CD8-positive, alpha-beta memory T cell (primary cell): ENCODE measurements at regions of chr20 and their contacts with region 1.

Region 1: DNA sequence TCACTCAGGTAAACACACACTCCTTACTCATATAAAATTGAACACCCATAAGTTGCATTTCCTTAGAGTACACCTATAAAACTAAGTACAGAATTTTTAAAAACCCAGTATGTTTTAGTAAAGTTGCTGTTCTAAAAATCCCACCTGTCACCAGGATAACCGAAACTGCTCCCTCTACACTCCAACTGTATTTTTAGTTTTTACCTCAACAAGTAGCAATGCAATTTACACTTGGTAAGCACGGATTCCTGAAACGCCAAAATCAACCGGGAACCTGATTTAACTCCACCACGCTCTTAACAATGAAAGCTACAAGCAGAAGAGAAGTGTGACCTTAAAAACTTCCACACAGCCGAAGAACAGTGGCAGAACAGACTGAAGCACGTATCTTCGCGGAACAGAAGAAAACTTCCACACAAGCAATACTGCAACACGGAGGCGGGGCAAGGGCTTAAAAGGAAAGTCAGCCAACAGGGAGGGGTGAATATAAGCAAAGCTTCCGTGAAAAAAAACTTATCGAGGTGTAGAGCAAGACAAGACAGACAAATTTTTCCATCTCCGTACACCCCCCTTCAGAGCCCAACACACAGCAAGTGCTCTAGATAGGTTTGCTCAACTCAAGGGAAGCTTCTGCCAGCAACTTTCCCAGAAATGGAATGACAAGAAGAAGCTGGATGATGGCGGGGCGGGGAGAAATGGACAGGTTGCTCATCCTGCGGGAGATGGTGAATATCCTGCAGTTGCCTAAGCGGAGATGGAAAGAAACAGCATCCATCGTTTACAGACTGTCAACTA is 1.4 kb downstream of the STAU1 start:
- DNase-seq: peak; percentile 40 to 71 (median 55)
- H3K4me3 ChIP-seq: peak overlapping the region; percentile 87
- H3K4me3 Mint-ChIP-seq: peak overlapping the region; percentile 87 to 98 (median 97)
- H3K27ac ChIP-seq: peak overlapping the region; percentile 69
- H3K27ac Mint-ChIP-seq: peak overlapping the region; percentile 47 to 97 (median 92)
- H3K4me1 ChIP-seq: peaks cover 38% of the 10 kb centered on the region
- H3K4me1 Mint-ChIP-seq: peaks cover 50 to 57% (median 54%) of the 10 kb centered on the region in 3 donors
- H3K27me3 ChIP-seq: no peaks in the 10 kb centered on the region
- H3K27me3 Mint-ChIP-seq: peaks cover 1 to 3% of the 10 kb centered on the region in 2 donors

Region 2: DNA sequence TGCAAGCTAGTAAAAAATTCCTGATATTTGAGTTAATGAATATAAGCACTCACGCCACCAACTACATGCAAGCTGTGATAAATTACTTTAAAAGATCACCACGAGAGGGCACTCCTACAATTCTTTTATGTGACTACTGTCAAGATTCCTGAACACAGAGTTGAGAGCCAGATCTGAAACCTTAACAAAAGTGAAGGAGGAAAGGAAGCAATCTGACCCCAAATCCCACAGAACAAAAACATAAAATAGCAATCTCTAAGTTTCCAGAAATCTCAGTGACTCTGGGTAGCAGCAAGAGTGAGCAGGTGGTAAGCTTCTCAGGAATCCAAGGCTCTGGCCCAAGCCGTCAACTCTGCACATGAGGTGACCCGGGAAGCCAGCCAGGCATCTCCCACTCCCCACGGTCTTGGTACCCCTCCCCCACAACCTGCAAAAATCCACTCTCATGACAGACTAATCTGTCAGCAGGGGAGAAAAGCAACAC is 53.7 kb before region 1 on chr20:
- CTCF ChIA-PET with region 1: interaction called, 10 read pairs
- POLR2A ChIA-PET with region 1: no interaction called
- DNase-seq: peak in 2 of 5 donors; percentile 40 to 54
- H3K4me3 ChIP-seq: no peak overlapping the region
- H3K4me3 Mint-ChIP-seq: no peak overlapping the region
- H3K27ac ChIP-seq: no peak overlapping the region
- H3K27ac Mint-ChIP-seq: peak overlapping the region in 7 of 8 donors; percentile 4 to 52 (median 31)
- H3K4me1 ChIP-seq: no peaks in the 10 kb centered on the region
- H3K4me1 Mint-ChIP-seq: peaks cover 10 to 26% (median 13%) of the 10 kb centered on the region in 3 donors
- H3K27me3 ChIP-seq: no peaks in the 10 kb centered on the region
- H3K27me3 Mint-ChIP-seq: no peaks in the 10 kb centered on the region